ENCODE measurements at regions of chr12 and their contacts with region 1.

Region 1: DNA sequence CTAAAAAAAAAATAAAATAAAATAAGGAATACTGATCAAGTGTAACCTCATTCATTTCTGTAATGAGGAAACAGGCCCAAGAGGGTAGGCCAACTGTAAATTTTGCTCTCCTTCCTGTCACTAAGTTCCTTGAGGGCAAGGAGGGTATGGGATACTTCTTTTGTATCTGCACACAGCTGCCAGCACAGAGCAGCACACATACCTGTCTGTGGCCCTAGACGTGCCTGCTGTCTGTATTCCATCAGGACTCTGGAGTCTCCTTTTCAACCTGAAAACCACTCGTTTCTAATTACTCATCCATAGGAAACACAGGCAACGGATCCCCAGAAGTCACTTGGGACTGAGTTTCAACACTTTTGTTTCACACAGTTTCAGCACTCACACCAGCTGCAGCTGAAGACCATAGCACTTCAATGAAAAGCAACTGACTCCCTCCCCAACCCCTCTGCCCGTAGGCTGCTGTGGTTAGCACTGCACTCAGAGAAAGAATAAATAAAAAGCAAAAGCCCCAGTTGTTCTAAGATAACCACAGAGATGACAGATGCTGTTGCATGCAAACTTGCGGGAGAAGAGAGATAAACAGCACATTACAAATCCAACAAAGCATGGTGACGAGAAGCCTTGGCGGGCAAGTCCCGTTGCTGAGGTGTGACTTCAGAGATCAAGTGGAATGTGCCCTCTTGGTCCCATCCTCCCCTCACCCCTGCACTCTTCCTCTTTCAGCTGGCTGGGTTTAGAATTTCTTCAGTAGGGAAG is 24.9 kb downstream of the CRACR2A start:
- DNase-seq: peak; percentile 64
- H3K4me3 Mint-ChIP-seq: no peak overlapping the region
- H3K27ac Mint-ChIP-seq: peak overlapping the region; percentile 70
- H3K4me1 Mint-ChIP-seq: peaks cover 36% of the 10 kb centered on the region
- H3K27me3 Mint-ChIP-seq: no peaks in the 10 kb centered on the region

Region 2: DNA sequence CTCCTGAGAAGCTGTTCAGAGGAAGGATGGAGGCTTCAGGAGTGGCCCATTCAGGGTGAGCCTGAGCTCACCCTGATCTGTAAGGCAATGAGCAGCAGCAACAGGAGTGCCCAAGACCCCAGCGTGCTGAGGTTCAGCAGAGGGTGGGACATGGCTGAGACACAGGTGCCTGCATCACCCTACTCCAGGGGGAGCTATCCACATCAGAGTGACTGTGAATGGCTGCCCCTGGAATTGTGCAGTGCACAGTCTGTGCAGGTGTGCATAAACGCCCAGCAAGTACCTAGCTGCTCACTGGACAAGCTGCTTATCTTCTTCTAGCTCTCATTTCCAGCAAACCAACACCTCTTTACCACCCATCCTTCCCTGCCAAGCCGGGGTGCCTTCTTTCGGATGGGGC is 377.6 kb before region 1 on chr12:
- CTCF ChIA-PET with region 1: no interaction called
- POLR2A ChIA-PET with region 1: no interaction called
- intact Hi-C with region 1: no loop called
- DNase-seq: no peak
- H3K4me3 Mint-ChIP-seq: no peak overlapping the region
- H3K27ac Mint-ChIP-seq: no peak overlapping the region
- H3K4me1 Mint-ChIP-seq: no peaks in the 10 kb centered on the region
- H3K27me3 Mint-ChIP-seq: no peaks in the 10 kb centered on the region

Region 3: GRCh38 chr12:3743803-3744202 is 15.7 kb after region 1 on chr12:
- CTCF ChIA-PET with region 1: interaction called, 4 read pairs
- POLR2A ChIA-PET with region 1: interaction called, 8 read pairs
- intact Hi-C with region 1: loop called (anchors 1 kb)
- DNase-seq: peak; percentile 72
- H3K4me3 Mint-ChIP-seq: no peak overlapping the region
- H3K27ac Mint-ChIP-seq: peak overlapping the region; percentile 24
- H3K4me1 Mint-ChIP-seq: peaks cover 38% of the 10 kb centered on the region
- H3K27me3 Mint-ChIP-seq: no peaks in the 10 kb centered on the region

Region 4: GRCh38 chr12:3837049-3837448 is 109.0 kb after region 1 on chr12:
- CTCF ChIA-PET with region 1: no interaction called
- POLR2A ChIA-PET with region 1: no interaction called
- intact Hi-C with region 1: no loop called
- DNase-seq: no peak
- H3K4me3 Mint-ChIP-seq: no peak overlapping the region
- H3K27ac Mint-ChIP-seq: no peak overlapping the region
- H3K4me1 Mint-ChIP-seq: peaks cover 43% of the 10 kb centered on the region
- H3K27me3 Mint-ChIP-seq: no peaks in the 10 kb centered on the region

Measured in activated CD4-positive, alpha-beta memory T cell treated with anti-CD3 and anti-CD28 coated beads for 36 hours (primary cell).